CD4-positive, alpha-beta T cell (primary cell): ENCODE measurements at regions of chr2 and their contacts with region 1.

Region 1: DNA sequence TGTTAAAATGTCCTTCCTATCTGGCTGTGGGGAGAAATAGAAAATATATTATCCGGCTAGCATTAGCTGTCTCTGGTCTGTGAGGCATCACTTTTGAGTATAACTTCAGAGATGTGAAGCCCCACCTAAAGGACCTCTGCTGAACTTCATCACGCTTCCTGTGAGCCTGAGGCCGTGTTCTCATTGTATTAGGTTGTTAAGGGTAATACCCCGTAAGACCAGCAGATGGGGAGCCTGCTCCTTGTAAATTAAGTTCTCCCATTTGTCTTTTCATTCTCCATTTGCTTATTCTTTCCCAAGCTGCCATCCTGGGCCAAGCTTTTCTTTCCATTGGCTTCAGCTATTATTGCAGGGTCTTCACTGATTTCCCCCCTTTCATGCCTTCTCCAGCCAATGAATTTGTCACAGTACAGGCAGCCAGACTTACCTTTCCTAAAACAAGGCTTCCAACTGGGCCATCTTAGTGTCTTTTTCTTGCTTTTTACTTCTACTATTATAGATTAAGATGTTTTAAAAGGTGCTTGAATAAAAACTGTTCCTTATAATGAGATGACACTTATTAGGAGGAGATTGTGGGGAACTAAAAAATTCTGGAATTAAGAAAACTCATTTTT is 12.4 kb downstream of the NIF3L1 start:
- DNase-seq: peak; percentile 42 to 91 (median 57)
- ATAC-seq: peak; percentile 100
- H3K4me3 ChIP-seq: no peak overlapping the region
- H3K4me3 Mint-ChIP-seq: no peak overlapping the region
- H3K27ac ChIP-seq: no peak overlapping the region
- H3K27ac Mint-ChIP-seq: peak overlapping the region; percentile 21
- H3K4me1 ChIP-seq: no peaks in the 10 kb centered on the region
- H3K4me1 Mint-ChIP-seq: peaks cover 6% of the 10 kb centered on the region
- H3K27me3 ChIP-seq: no peaks in the 10 kb centered on the region
- H3K27me3 Mint-ChIP-seq: no peaks in the 10 kb centered on the region
- CTCF ChIP-seq: peak; percentile 84

Region 2: DNA sequence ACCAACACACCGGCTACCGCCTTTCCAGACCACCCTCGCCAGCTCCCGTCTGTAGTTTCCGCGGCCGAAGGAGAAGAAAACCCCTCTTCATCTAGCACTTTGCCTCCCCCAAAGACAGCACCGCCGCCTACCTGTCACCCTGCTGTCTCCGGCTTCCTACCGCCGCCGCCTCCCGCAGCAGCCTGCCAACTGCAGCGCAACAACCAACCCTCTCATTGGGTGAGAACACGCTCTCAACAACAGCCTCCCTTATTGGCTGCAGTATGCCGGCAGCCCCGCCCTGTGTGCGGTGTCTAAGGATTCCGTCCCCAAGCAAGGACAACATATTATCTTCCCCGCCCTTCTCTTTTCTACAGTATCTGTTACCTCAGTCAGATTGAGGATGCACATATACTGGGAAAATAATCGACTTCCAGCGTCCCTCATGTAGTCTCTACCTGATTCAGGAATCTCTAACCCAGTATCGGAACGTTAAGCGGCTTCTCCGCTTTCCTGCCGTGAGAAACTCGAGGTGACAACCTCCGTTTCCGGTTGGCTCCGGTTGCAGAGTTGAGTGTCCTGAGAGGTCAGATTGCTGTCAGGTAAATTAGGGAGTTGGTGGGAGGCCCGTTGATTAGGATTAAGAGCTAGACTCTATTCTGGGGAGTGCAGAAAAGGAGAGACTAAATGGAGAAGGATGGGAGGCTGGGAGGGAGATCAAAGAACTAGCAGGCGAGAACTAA is 170.1 kb after region 1 on chr2 and contains the starts of genes HYCC2 and NDUFB3:
- CTCF ChIA-PET with region 1: interaction called, 7 read pairs
- POLR2A ChIA-PET with region 1: interaction called, 16 read pairs
- intact Hi-C with region 1: loop called (anchors 1 to 2 kb)
- DNase-seq: peak; percentile 85 to 98 (median 90)
- ATAC-seq: peak; percentile 92
- H3K4me3 ChIP-seq: peak within 1 kb of the TSS; percentile 87
- H3K4me3 Mint-ChIP-seq: peak within 1 kb of the TSS; percentile 99
- H3K27ac ChIP-seq: peak within 1 kb of the TSS; percentile 84 to 93
- H3K27ac Mint-ChIP-seq: peak within 1 kb of the TSS; percentile 97
- H3K4me1 ChIP-seq: peaks cover 18% of the 10 kb centered on the region
- H3K4me1 Mint-ChIP-seq: peaks cover 50% of the 10 kb centered on the region
- H3K27me3 ChIP-seq: no peaks in the 10 kb centered on the region
- H3K27me3 Mint-ChIP-seq: no peaks in the 10 kb centered on the region
- CTCF ChIP-seq: peak; percentile 39
- total RNA-seq, gene HYCC2: 29.2 to 30.7 TPM
- total RNA-seq, gene NDUFB3: 10.1 to 13.6 TPM

Region 3: DNA sequence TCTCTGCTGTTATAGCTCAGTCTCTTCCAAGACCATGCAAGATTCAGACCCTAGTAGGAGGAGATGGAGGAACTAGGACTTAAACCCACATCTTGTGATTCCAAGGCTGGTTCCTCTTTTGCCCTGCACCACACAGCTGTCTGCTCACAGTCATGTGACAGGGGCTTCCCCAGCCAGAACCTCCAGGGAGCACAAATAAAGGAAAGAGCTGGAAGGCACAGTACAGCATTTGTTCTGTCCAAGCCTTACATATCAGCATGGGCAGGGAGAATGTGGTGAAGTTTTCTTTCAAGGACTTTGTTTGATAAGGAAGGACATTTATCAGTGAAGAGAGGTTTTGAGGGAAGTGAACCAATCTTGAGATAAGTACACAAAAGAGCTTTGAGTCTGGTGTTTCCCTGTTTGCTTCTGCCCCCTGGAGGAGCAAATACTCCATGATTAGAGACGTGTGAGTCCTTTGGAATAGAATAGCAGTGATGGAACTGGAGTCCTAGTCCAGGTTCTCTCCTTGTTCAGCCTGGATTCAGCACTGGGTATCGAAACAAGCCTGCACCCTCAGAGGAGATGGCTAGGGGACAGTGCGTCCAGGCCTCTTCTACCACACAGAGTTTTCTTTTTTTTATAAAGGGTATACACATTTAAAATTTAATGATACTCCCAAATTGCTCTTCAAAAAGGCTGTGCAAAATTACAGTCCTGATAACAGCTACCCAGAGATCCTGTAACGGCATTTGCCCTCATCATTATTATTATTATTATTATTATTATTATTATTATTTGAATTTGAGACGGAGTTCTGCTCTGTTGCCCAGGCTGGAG is 256.8 kb after region 1 on chr2:
- CTCF ChIA-PET with region 1: interaction called, 5 read pairs
- POLR2A ChIA-PET with region 1: no interaction called
- intact Hi-C with region 1: loop called (anchors 5 kb)
- DNase-seq: peak in 13 of 14 experiments; percentile 20 to 84 (median 50)
- ATAC-seq: peak; percentile 93
- H3K4me3 ChIP-seq: no peak overlapping the region
- H3K4me3 Mint-ChIP-seq: no peak overlapping the region
- H3K27ac ChIP-seq: peak overlapping the region; percentile 52 to 63
- H3K27ac Mint-ChIP-seq: peak overlapping the region; percentile 82
- H3K4me1 ChIP-seq: peaks cover 13% of the 10 kb centered on the region
- H3K4me1 Mint-ChIP-seq: peaks cover 12% of the 10 kb centered on the region
- H3K27me3 ChIP-seq: no peaks in the 10 kb centered on the region
- H3K27me3 Mint-ChIP-seq: no peaks in the 10 kb centered on the region
- CTCF ChIP-seq: peak; percentile 70

Region 4: GRCh38 chr2:201171259-201171814 is 269.8 kb after region 1 on chr2:
- CTCF ChIA-PET with region 1: no interaction called
- POLR2A ChIA-PET with region 1: no interaction called
- intact Hi-C with region 1: loop called in 1 of 2 experiments (anchors 2 kb)
- DNase-seq: no peak
- ATAC-seq: no peak
- H3K4me3 ChIP-seq: no peak overlapping the region
- H3K4me3 Mint-ChIP-seq: no peak overlapping the region
- H3K27ac ChIP-seq: no peak overlapping the region
- H3K27ac Mint-ChIP-seq: peak overlapping the region; percentile 51
- H3K4me1 ChIP-seq: no peaks in the 10 kb centered on the region
- H3K4me1 Mint-ChIP-seq: no peaks in the 10 kb centered on the region
- H3K27me3 ChIP-seq: no peaks in the 10 kb centered on the region
- H3K27me3 Mint-ChIP-seq: no peaks in the 10 kb centered on the region
- CTCF ChIP-seq: no peak

Region 5: DNA sequence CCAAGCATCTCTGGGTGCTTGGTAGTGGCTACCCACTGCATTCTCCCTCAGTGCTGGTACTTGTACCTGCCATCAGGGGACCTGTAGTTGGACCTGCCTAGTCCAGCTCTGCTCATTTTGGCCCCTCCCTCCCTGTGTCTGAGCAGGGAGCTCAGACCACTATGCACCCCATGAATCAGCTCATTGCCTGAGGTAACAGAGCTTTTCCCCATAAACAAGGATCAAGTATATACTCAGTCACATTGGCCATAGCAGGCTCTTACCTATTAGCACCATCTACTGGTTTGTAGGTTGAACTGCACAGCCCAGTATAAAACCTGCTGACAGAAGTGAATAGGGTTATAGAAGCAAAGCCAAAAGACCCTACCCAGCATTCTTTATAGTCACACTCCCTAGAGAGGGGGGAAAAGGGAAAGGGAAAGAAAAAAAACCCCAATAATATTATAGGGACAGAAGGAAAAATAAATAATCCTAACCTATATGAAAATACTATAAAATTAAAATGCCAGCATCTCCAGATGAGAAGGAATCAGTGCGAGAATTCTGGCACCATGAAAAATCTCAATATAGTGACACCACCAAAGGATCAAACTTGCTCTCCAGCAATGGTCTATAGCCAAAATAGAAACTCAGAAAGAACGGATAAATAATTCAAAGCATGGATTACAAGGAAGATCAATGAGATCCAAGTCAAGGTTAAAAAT is 462.4 kb after region 1 on chr2:
- CTCF ChIA-PET with region 1: no interaction called
- POLR2A ChIA-PET with region 1: no interaction called
- intact Hi-C with region 1: loop called in 1 of 2 experiments (anchors 10 kb)
- DNase-seq: peak in 7 of 14 experiments; percentile 3 to 75 (median 48)
- ATAC-seq: peak; percentile 97
- H3K4me3 ChIP-seq: no peak overlapping the region
- H3K4me3 Mint-ChIP-seq: no peak overlapping the region
- H3K27ac ChIP-seq: no peak overlapping the region
- H3K27ac Mint-ChIP-seq: peak overlapping the region; percentile 28
- H3K4me1 ChIP-seq: peaks cover 17% of the 10 kb centered on the region
- H3K4me1 Mint-ChIP-seq: peaks cover 36% of the 10 kb centered on the region
- H3K27me3 ChIP-seq: no peaks in the 10 kb centered on the region
- H3K27me3 Mint-ChIP-seq: no peaks in the 10 kb centered on the region
- CTCF ChIP-seq: peak; percentile 95

Region 6: DNA sequence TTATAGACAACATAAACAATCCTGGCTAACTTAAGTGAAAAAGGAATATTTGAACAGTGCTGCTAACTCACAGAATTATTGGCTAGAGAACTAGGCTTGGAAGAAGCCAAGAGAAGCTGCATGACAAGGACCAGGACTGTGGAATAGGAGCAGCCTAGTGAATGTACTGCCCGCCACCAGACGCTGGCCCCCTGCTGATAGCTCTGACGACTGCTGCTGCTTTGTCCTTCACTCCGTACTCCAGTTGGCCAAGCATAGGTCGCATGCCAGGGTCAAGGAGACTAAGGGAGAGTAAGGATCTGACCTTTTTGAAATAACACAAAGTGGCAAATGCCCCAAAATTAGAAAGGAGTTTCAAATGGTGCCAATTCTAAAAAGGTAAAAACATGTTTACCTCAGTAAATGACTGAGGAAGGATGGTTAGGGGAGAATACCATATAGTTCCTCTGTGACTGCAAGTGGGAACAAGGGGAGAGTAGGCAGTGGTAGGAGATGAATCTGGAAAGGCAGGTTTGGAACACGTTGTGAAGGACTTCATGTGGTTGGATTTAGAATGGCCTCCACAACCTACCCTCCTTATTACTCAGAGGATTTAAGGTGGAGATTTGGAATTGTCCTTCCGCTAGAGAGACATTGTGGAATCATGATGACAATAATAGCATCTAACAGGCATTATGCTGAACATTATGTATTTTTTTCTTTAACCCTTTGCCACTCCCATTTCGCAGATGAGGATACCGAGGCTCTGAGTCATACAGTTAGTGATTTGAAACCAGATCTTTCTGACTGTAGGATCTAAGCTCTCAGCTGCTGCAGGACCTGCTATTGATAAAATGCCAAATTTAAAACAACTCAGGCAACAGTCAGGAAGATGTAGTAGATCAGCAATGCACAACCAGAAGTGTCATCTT is 569.5 kb after region 1 on chr2:
- CTCF ChIA-PET with region 1: no interaction called
- POLR2A ChIA-PET with region 1: no interaction called
- intact Hi-C with region 1: no loop called
- DNase-seq: no peak
- ATAC-seq: no peak
- H3K4me3 ChIP-seq: no peak overlapping the region
- H3K4me3 Mint-ChIP-seq: no peak overlapping the region
- H3K27ac ChIP-seq: no peak overlapping the region
- H3K27ac Mint-ChIP-seq: no peak overlapping the region
- H3K4me1 ChIP-seq: no peaks in the 10 kb centered on the region
- H3K4me1 Mint-ChIP-seq: no peaks in the 10 kb centered on the region
- H3K27me3 ChIP-seq: no peaks in the 10 kb centered on the region
- H3K27me3 Mint-ChIP-seq: no peaks in the 10 kb centered on the region
- CTCF ChIP-seq: no peak

Region 7: GRCh38 chr2:202178342-202178958 is 1276.9 kb after region 1 on chr2:
- CTCF ChIA-PET with region 1: no interaction called
- POLR2A ChIA-PET with region 1: no interaction called
- intact Hi-C with region 1: loop called (anchors 10 kb)
- DNase-seq: peak in 13 of 14 experiments; percentile 10 to 73 (median 35)
- ATAC-seq: no peak
- H3K4me3 ChIP-seq: no peak overlapping the region
- H3K4me3 Mint-ChIP-seq: no peak overlapping the region
- H3K27ac ChIP-seq: no peak overlapping the region
- H3K27ac Mint-ChIP-seq: no peak overlapping the region
- H3K4me1 ChIP-seq: no peaks in the 10 kb centered on the region
- H3K4me1 Mint-ChIP-seq: no peaks in the 10 kb centered on the region
- H3K27me3 ChIP-seq: no peaks in the 10 kb centered on the region
- H3K27me3 Mint-ChIP-seq: peaks cover 8% of the 10 kb centered on the region
- CTCF ChIP-seq: peak; percentile 87